Common myeloid progenitor, CD34-positive (primary cell): ENCODE measurements at regions of chr10 and their contacts with region 1.

Region 1: DNA sequence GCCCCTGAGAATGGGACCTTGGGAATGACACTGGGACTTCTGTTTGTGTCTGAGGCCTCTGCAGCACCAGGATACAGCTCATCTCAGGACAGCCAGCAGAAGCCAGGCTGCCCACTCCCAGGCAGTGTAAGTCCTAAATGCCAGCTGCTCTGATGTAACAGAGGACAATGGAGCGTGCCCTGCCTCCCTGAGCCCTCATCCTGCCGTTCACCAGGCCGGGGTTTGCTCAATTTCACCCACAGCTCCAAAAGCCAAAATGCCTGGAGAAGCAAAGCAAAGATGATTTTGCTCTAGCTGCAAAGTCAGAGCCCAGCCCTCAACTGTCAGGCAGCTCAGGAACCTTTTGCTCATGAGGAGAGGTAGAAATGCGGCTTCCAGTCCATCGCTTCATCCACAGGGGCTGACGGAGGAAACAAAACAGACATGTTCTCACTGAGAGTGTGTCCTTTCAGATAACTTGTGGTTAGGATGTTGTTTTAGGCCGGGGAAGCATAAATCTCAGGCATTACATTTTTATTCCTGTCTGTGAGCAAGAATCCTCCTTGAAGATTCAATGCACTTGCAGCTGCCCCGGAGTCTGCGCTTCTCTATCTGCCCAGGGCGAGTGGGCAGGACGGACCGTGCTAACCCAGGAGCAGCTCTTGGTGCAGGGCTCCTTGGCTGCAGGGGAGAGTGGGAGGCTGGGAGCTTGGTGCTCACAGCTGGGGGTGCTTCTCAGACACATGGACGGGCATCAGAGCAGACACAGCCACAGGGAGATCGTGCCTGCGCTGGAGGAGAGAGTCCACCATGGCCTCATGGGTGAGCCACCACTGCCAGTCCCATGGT is 83.2 kb upstream of the CHST15 start:
- DNase-seq: peak in 2 of 3 donors; percentile 46 to 71
- H3K4me3 ChIP-seq: no peak overlapping the region
- H3K27ac ChIP-seq: no peak overlapping the region
- H3K4me1 ChIP-seq: peaks cover 3 to 31% (median 23%) of the 10 kb centered on the region in 4 experiments
- H3K27me3 ChIP-seq: peaks cover 0 to 2% (median 0%) of the 10 kb centered on the region in 5 experiments

Region 2: DNA sequence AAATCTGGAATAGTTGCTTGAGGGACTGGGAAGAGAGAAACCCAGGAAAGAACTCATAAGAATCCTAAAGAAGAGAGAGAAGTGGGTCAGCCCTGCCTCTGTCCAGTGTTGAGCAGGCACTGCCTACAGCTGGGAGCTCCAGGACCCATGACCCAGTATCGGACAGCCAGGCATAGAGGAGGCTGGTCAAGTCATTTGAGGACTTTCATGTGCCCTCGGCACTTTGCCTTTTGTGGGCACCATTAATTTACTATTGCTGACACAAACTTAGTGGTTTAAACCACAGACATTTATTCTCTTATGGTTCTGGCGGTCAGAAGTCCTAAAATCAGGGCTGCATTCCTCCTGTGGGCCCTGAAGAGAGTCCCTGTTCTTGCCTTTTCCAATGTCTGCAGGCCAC is 345.3 kb before region 1 on chr10:
- CTCF ChIA-PET with region 1: no interaction called
- POLR2A ChIA-PET with region 1: no interaction called
- DNase-seq: no peak
- H3K4me3 ChIP-seq: no peak overlapping the region
- H3K27ac ChIP-seq: no peak overlapping the region
- H3K4me1 ChIP-seq: peaks cover 0 to 2% (median 0%) of the 10 kb centered on the region in 4 experiments
- H3K27me3 ChIP-seq: peaks cover 0 to 26% (median 6%) of the 10 kb centered on the region in 5 experiments

Region 3: DNA sequence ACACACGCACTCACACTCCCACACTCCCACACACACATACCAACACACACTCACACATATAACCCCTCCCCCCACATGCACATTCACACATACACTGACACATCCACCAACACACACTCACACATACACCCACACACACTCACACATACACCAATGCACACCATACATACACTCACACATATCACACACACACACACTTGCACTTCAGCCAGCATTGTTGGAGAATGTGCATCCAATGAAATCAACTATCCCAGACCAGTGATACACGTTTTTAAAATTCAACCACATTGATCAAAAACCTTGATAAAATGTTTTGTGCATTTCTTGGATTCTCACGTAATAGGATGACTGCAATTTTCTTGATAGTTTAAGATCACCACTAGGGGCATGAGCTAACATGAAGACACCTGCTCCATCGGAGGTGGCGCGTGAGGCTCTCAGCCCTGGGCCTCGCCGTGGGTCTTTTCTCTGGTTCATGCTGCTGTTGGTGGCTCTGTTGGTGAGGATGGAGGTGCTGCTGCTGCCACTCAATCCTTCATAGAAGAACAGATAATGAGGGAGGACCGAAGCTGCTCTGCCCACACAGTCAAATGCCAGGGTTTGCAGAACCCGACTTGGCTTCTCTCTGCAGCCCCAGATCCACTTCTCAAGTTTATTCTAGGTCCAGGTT is 51.0 kb before region 1 on chr10:
- CTCF ChIA-PET with region 1: no interaction called
- POLR2A ChIA-PET with region 1: no interaction called
- DNase-seq: peak; percentile 25 to 57 (median 48)
- H3K4me3 ChIP-seq: no peak overlapping the region
- H3K27ac ChIP-seq: no peak overlapping the region
- H3K4me1 ChIP-seq: peaks cover 0 to 6% (median 1%) of the 10 kb centered on the region in 4 experiments
- H3K27me3 ChIP-seq: no peaks in the 10 kb centered on the region

Region 4: GRCh38 chr10:124152916-124153826 is 23.4 kb before region 1 on chr10:
- CTCF ChIA-PET with region 1: interaction called, 11 read pairs
- POLR2A ChIA-PET with region 1: interaction called, 3 read pairs
- DNase-seq: peak; percentile 85 to 95 (median 92)
- H3K4me3 ChIP-seq: peak overlapping the region in 1 of 7 experiments; percentile 43
- H3K27ac ChIP-seq: no peak overlapping the region
- H3K4me1 ChIP-seq: peaks cover 2 to 44% (median 35%) of the 10 kb centered on the region in 4 experiments
- H3K27me3 ChIP-seq: peaks cover 0 to 19% (median 14%) of the 10 kb centered on the region in 5 experiments

Region 5: DNA sequence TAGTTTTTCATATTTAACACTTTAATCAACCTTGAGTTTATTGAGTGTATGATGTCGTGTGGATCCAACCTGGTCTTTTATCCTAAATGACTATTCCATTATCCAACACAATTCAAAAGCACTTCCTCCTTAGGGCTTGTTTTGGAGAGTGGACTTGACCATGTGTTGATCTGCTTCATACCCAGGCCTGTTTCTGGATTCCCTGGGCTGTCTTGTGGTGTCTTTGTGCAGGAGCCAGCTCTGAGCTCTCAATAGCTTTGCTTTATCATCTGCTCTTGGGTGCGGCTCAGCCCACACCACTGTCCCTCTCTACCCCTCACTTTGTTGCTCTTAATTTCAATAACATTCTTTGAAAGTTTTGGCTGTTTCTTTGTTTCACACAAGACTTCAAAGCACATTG is 12.3 kb before region 1 on chr10:
- CTCF ChIA-PET with region 1: no interaction called
- POLR2A ChIA-PET with region 1: no interaction called
- DNase-seq: no peak
- H3K4me3 ChIP-seq: no peak overlapping the region
- H3K27ac ChIP-seq: no peak overlapping the region
- H3K4me1 ChIP-seq: no peaks in the 10 kb centered on the region
- H3K27me3 ChIP-seq: peaks cover 0 to 25% (median 5%) of the 10 kb centered on the region in 5 experiments